Posterior vena cava (tissue), 2 donors: ENCODE measurements at regions of chr11 and their contacts with region 1.

Region 1: DNA sequence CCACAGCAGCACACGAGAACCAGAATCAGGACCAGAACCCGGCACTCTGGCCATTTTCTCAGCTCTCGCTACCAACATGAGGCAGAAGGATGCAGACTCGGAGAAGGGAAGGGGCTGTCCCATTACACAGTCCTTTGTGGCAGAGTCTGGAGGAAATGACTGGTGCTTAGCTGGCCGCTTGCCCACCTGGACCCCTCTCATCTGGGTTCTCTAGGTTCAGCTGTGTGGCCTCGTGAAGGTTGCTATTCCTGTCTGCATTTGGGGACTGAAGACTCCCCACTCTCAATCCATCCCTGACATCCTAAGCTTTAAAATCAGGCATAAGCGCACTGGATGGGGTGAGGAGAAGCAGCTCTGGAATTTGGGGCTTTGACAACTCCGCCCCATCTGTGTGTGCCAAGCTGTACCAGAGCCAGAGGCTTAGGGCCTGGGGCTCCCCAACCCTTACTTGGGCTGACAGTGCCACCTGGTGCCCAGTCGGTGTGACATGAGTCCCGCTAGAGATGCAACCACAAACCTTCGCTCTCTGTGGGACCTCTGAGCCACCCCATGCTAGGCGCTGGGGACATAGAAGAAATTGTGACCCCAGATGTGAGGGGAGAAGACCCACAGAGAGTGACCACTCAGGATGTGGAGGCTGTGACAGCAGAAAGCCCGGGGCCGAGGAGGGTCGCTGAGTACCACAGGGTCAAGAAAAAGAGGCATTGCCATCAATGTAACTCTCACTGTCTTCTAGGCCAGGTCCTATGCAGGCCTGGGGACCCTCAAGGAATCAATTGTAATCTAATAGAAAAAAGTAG is 35.9 kb upstream of the FCHSD2 start:
- DNase-seq: peak; percentile 96

Region 2: GRCh38 chr11:72722050-72722748 is 455.8 kb before region 1 on chr11:
- intact Hi-C with region 1: loop called (anchors 5 to 10 kb)
- DNase-seq: peak; percentile 96

Region 3: GRCh38 chr11:72831513-72832300 is 346.3 kb before region 1 on chr11:
- intact Hi-C with region 1: loop called (anchors 2 kb)
- DNase-seq: peak; percentile 94